Activated CD4-positive, alpha-beta T cell treated with anti-CD3 and anti-CD28 coated beads for 36 hours (primary cell): ENCODE measurements at regions of chr6 and their contacts with region 1.

Region 1: DNA sequence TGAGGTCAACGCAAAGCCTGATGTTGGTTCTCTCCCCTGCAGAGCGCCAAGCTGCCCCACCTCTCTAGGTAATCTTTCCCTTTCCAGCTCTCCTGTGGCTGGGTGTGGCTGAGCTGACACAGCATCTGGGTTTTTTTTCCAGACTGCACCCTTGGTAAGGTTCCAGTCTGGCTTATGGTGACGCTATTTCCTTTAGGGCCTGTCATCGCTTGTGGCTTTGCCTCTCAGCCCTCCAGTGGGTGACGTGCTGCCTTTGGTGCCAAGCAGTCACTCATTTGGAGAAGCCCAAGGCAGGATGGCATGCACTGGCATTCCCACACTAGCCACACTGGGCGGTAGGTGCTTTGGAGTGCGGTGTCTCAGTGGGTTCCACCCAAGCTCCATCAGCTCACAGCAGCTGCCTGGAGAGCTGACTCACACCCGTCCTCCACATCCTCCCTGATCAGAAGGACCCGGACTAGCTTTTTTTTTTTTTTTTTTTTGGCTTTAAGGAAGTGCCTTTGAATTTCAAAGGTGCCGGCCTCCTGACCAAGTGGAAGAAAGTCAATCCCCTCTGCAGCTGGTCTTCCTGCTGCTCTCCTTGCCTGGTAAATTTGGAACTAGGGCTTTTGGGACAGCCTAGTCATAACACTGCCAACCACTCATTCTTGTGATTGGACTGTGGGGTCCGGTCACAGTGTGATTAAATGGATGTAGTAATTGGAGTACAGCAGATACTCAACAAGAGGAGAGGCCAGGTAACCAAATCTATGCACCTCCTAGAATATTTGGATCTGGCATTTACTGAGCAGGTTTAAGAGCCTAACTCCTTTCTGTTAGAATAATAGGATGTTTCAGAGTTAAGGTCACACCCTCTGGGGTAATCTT is 153.6 kb downstream of the CD83 start:
- DNase-seq: peak; percentile 83
- ATAC-seq: peak; percentile 93
- H3K4me3 Mint-ChIP-seq: no peak overlapping the region
- H3K27ac Mint-ChIP-seq: peak overlapping the region; percentile 69
- H3K4me1 Mint-ChIP-seq: peaks cover 56% of the 10 kb centered on the region
- H3K27me3 Mint-ChIP-seq: no peaks in the 10 kb centered on the region

Region 2: GRCh38 chr6:14228571-14228970 is 42.6 kb before region 1 on chr6:
- CTCF ChIA-PET with region 1: no interaction called
- POLR2A ChIA-PET with region 1: interaction called, 4 read pairs
- intact Hi-C with region 1: loop called in 1 of 2 experiments (anchors 5 kb)
- DNase-seq: peak; percentile 83
- ATAC-seq: peak; percentile 87
- H3K4me3 Mint-ChIP-seq: no peak overlapping the region
- H3K27ac Mint-ChIP-seq: peak overlapping the region; percentile 11
- H3K4me1 Mint-ChIP-seq: peaks cover 36% of the 10 kb centered on the region
- H3K27me3 Mint-ChIP-seq: no peaks in the 10 kb centered on the region